ENCODE measurements at regions of chr5 and their contacts with region 1.

Region 1: GRCh38 chr5:116068028-116068632 is 16.7 kb upstream of the COMMD10 start:
- DNase-seq: no peak
- H3K4me3 ChIP-seq: no peak overlapping the region
- H3K27ac ChIP-seq: no peak overlapping the region
- H3K4me1 ChIP-seq: no peaks in the 10 kb centered on the region
- H3K27me3 ChIP-seq: no peaks in the 10 kb centered on the region
- CTCF ChIP-seq: peak; percentile 45 to 86 (median 54)
- EP300 ChIP-seq: no peak
- POLR2A ChIP-seq: no peak

Region 2: DNA sequence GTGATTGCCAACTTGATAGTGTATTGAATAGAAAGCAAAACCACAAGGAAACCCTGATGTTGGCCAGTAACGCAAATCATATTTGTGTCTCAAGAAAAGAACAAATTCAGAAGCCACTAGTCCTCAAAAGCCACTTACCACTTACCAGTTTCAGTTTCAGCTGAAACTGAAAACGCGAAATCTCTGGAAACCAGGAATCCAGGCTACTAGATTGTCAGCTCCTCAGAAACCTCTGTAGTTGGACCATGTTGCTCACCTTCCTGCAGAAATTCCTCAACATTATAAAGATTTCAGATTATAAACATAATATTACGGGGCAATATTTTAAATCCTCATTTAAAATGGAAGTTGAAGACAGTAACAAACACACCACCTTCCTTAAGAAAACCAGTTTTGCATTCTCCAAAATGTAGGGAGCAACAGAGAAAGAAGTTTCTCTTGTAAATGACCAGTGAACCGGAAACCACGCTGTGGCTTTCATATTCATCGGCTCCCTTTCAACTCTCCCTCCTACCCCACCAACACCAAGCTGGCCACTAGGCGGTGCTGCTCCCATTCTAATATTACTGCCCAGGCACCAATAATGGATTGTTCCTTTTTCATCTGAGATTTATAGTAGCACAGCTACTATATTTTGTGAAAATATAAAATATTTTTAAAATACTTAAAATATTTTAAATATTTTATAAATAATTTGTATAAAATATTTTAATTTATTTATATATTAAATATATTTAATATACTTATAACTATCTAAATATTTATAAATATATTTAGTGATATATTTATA is 433.6 kb before region 1 on chr5:
- intact Hi-C with region 1: loop called (anchors 1 kb)
- DNase-seq: peak; percentile 91
- H3K4me3 ChIP-seq: peak overlapping the region in 3 of 4 donors; percentile 26 to 40 (median 35)
- H3K27ac ChIP-seq: peak overlapping the region; percentile 41 to 70 (median 62)
- H3K4me1 ChIP-seq: peaks cover 0 to 5% (median 0%) of the 10 kb centered on the region in 4 donors
- H3K27me3 ChIP-seq: no peaks in the 10 kb centered on the region
- CTCF ChIP-seq: peak; percentile 75 to 91 (median 84)
- EP300 ChIP-seq: no peak
- POLR2A ChIP-seq: no peak

Region 3: GRCh38 chr5:116002116-116002906 is 65.8 kb before region 1 on chr5:
- intact Hi-C with region 1: no loop called
- DNase-seq: no peak
- H3K4me3 ChIP-seq: no peak overlapping the region
- H3K27ac ChIP-seq: no peak overlapping the region
- H3K4me1 ChIP-seq: no peaks in the 10 kb centered on the region
- H3K27me3 ChIP-seq: no peaks in the 10 kb centered on the region
- CTCF ChIP-seq: no peak
- EP300 ChIP-seq: no peak
- POLR2A ChIP-seq: no peak